ENCODE measurements at regions of chr1 and their contacts with region 1.

Region 1: DNA sequence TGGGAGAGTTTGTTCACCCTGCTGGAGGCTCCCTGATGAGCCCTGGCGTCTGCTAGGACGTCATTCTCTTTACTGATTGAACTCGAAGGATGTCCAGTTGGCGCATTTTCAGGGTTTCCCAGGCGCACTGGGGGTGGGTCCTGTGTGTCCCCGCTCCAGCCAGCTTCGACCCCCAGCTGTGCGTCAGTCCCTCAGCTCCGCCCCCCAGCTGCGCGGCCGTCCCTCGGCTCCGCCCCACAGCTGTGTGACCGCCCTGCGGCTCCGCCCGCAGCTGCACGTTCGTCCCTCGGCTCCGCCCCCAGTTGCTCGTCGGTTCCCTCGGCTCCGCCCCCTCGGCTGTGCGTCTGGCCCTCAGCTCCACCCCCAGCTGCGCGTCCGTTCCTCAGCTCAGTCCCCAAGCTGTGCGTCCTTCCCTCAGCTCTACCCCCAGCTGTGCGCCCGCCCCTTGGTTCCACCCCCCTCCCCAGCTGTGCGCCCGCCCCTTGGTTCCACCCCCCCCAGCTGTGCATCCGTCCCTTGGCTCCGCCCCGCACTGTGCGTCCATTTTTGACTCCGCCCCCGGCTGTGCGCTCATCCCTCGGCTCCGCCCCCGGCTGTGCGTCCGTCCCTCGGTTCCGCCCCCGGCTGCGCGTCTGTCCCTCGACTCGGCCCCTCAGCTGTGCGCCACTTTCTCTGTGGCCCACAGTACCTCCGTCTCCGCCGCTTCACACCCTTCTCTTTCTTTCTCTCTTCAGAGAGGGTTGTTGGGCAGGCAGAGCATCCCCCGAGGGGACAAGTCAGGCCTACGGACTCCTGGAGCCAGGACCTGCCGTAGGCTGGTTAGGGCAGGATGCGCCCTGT is 61.3 kb downstream of the FAAP20 start:
- DNase-seq: peak; percentile 99
- H3K4me3 ChIP-seq: peak overlapping the region; percentile 51 to 59 (median 55)
- H3K27ac ChIP-seq: peak overlapping the region; percentile 89 to 95 (median 92)
- H3K4me1 ChIP-seq: peaks cover 27 to 35% (median 33%) of the 10 kb centered on the region in 4 donors
- H3K27me3 ChIP-seq: no peaks in the 10 kb centered on the region
- CTCF ChIP-seq: peak in 1 of 3 experiments; percentile 6
- EP300 ChIP-seq: no peak
- POLR2A ChIP-seq: peak; percentile 48

Region 2: DNA sequence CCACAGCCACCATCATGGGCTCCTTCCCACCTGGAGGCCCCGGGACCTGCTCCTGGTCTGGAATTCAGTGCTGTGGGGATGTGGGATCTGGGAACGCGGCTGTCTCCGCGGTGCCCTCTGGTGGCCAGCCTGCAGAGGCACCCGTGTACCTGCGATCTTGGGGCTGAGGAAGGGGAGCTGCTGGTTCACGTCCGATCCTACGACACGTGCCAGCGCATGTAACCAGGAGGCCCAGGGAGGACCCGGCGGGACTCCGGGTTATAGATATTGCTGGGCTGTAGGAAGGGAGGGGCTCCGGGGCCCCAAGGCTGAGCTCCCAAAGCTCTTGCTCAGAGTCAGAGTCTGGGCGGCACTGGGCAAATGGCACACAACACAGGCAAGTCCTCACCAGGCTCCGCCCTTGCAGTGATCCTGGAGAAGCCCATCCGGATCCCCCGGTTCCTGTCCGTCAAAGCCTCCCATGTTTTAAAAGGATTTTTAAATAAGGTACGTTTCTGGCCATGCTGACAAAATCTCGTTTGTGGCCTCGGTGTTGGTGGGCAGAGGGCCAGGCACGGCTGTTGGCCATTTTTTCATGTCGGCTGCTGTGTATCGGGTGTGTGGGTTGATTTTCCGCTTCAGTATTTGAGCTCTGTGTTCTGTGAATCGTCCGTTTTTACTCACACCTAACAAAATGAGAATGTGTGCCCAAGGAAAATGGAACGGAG is 41.2 kb after region 1 on chr1:
- intact Hi-C with region 1: loop called (anchors 1 kb)
- DNase-seq: no peak
- H3K4me3 ChIP-seq: peak overlapping the region; percentile 54 to 62 (median 58)
- H3K27ac ChIP-seq: peak overlapping the region; percentile 42 to 69 (median 66)
- H3K4me1 ChIP-seq: peaks cover 5 to 21% (median 11%) of the 10 kb centered on the region in 4 donors
- H3K27me3 ChIP-seq: no peaks in the 10 kb centered on the region
- CTCF ChIP-seq: peak; percentile 88 to 99 (median 91)
- EP300 ChIP-seq: no peak
- POLR2A ChIP-seq: no peak

Region 3: GRCh38 chr1:2391041-2391930 is 258.0 kb after region 1 on chr1 and contains the starts of genes MORN1 and RER1:
- intact Hi-C with region 1: loop called (anchors 2 kb)
- DNase-seq: peak; percentile 99
- H3K4me3 ChIP-seq: peak within 1 kb of the TSS; percentile 84 to 99 (median 96)
- H3K27ac ChIP-seq: peak within 1 kb of the TSS; percentile 77 to 94 (median 90)
- H3K4me1 ChIP-seq: peaks cover 22 to 50% (median 47%) of the 10 kb centered on the region in 4 donors
- H3K27me3 ChIP-seq: peaks cover 0 to 4% (median 0%) of the 10 kb centered on the region in 4 donors
- CTCF ChIP-seq: no peak
- EP300 ChIP-seq: no peak
- POLR2A ChIP-seq: peak; percentile 82
- total RNA-seq, gene MORN1: 7.0 to 9.8 (median 8.0) TPM
- total RNA-seq, gene RER1: 47.3 to 67.3 (median 56.4) TPM